Motor neuron (in vitro differentiated cells): ENCODE measurements at regions of chr2 and their contacts with region 1.

Region 1: DNA sequence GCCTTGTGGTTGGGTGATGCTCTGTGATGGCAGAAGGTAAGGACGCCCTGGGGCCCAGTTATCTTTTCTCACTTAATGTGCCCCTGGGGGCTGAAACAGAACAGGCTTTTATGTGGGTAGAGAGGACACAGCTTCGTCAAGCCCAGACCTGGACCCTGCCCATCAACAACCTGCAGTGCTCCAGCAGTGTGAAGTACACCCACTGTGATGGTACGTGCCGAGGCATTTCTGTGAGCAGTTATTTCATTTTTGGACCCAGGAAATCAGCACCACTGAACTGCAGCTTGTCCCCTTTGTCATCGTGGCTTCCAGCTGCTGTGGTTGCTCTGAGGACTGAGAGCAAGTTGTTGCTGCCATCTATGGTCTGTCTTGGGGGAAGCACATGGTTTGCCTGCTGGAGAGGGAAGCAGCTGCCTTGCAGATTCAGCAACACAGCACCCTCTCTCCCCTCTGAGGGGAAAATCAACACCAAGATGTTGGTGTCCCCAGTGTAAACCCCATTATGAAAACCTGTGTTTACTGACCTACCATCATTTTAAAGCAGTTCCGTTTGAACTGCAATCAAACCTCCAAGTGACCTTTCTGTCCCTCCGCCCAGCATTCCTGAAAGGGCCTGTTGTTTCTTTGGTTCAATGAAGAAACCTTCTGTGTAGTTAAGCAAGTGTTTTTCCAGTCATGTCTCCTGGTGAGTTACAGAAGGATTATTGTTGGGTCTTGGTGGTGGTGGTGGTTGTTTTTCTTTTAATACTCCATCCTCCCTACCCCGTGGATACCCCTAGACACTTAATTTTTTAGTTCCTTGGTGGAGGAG is 158.2 kb downstream of the MGAT5 start:
- ATAC-seq: peak; percentile 80 to 99 (median 96)
- H3K4me3 ChIP-seq: no peak overlapping the region
- H3K27ac ChIP-seq: peak overlapping the region in 1 of 2 donors; percentile 36
- H3K4me1 ChIP-seq: peaks cover 9 to 10% of the 10 kb centered on the region in 2 donors

Region 2: GRCh38 chr2:134245340-134245984 is 166.6 kb before region 1 on chr2:
- in situ Hi-C with region 1: loop called in 2 of 9 experiments (anchors 25 kb)
- ATAC-seq: peak; percentile 35 to 76 (median 62)
- H3K4me3 ChIP-seq: no peak overlapping the region
- H3K27ac ChIP-seq: no peak overlapping the region
- H3K4me1 ChIP-seq: peaks cover 5 to 12% of the 10 kb centered on the region in 2 donors